AG04450 (cell line): ENCODE measurements at regions of chr2 and their contacts with region 1.

Region 1: DNA sequence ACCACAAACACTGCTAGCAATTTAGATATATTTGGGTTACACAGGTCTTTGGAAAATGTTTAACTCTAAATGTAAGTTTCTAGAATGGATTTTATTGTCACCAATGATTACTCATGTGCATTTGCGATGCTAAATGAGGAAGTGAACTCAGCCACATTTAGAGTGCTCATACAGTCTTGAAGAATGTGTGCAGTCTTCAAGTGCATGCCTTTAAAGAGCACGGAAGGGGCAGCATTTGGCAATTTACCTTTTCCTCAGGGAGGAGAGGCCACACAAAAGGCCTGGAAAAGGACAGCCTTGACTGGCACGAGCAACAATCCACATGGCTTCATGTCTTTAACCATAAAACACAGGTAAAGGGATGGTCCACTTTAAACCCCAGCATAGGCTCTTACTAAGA is 78.5 kb upstream of the STK17B start:
- DNase-seq: no peak
- H3K4me3 ChIP-seq: no peak overlapping the region
- H3K27ac ChIP-seq: peak overlapping the region; percentile 71
- H3K27me3 ChIP-seq: no peaks in the 10 kb centered on the region
- CTCF ChIP-seq: no peak

Region 2: DNA sequence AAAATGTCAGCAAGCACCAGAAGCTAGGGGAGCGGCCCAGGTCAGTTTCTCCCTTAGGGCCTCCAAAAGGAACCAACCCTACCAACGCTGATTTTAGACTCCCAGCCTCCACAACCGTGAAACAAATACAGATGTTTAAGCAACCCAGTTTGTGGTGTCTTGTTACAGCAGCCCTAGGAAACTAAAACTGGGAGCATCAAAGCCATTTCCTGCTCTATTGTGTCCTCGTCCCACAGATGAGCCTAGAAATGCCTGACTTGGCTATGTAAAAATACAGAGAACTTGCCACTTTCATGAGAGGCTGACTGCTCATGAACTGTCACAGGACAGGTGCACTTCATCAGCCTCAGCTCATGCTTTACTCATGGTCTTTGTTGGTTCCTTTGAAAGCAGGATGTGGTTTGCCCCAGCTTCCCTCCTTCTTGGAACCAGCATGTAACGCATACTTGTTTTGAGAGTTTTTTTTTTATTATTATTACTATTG is 690.4 kb before region 1 on chr2:
- CTCF ChIA-PET with region 1: no interaction called
- POLR2A ChIA-PET with region 1: interaction called, 10 read pairs
- DNase-seq: peak; percentile 99
- H3K4me3 ChIP-seq: no peak overlapping the region
- H3K27ac ChIP-seq: peak overlapping the region; percentile 96
- H3K27me3 ChIP-seq: no peaks in the 10 kb centered on the region
- CTCF ChIP-seq: no peak

Region 3: GRCh38 chr2:196213252-196213980 is 36.4 kb before region 1 on chr2:
- CTCF ChIA-PET with region 1: no interaction called
- POLR2A ChIA-PET with region 1: no interaction called
- DNase-seq: no peak
- H3K4me3 ChIP-seq: no peak overlapping the region
- H3K27ac ChIP-seq: no peak overlapping the region
- H3K27me3 ChIP-seq: no peaks in the 10 kb centered on the region
- CTCF ChIP-seq: no peak

Region 4: GRCh38 chr2:196233021-196233804 is 16.6 kb before region 1 on chr2:
- CTCF ChIA-PET with region 1: interaction called, 4 read pairs
- POLR2A ChIA-PET with region 1: interaction called, 11 read pairs
- DNase-seq: peak; percentile 62
- H3K4me3 ChIP-seq: no peak overlapping the region
- H3K27ac ChIP-seq: peak overlapping the region; percentile 62
- H3K27me3 ChIP-seq: no peaks in the 10 kb centered on the region
- CTCF ChIP-seq: no peak